B cell (primary cell): ENCODE measurements at regions of chr2 and their contacts with region 1.

Region 1: GRCh38 chr2:8477552-8478470 is 204.0 kb upstream of the ID2 start:
- DNase-seq: peak; percentile 80
- ATAC-seq: peak; percentile 71
- H3K4me3 ChIP-seq: peak overlapping the region in 2 of 5 experiments; percentile 16 to 20
- H3K4me3 Mint-ChIP-seq: peak overlapping the region; percentile 69
- H3K27ac ChIP-seq: no peak overlapping the region
- H3K27ac Mint-ChIP-seq: peak overlapping the region; percentile 74
- H3K4me1 ChIP-seq: peaks cover 56 to 57% of the 10 kb centered on the region in 2 donors
- H3K4me1 Mint-ChIP-seq: peaks cover 49% of the 10 kb centered on the region
- H3K27me3 ChIP-seq: peaks cover 0 to 83% (median 70%) of the 10 kb centered on the region in 4 experiments
- H3K27me3 Mint-ChIP-seq: peaks cover 63% of the 10 kb centered on the region
- CTCF ChIP-seq: no peak

Region 2: GRCh38 chr2:8303322-8303832 is 174.4 kb before region 1 on chr2:
- CTCF ChIA-PET with region 1: no interaction called
- POLR2A ChIA-PET with region 1: no interaction called
- intact Hi-C with region 1: loop called (anchors 5 kb)
- DNase-seq: peak; percentile 80
- ATAC-seq: peak; percentile 82
- H3K4me3 ChIP-seq: no peak overlapping the region
- H3K4me3 Mint-ChIP-seq: peak overlapping the region; percentile 57
- H3K27ac ChIP-seq: no peak overlapping the region
- H3K27ac Mint-ChIP-seq: peak overlapping the region; percentile 62
- H3K4me1 ChIP-seq: peaks cover 43 to 51% of the 10 kb centered on the region in 2 donors
- H3K4me1 Mint-ChIP-seq: peaks cover 38% of the 10 kb centered on the region
- H3K27me3 ChIP-seq: peaks cover 0 to 78% (median 55%) of the 10 kb centered on the region in 4 experiments
- H3K27me3 Mint-ChIP-seq: peaks cover 81% of the 10 kb centered on the region
- CTCF ChIP-seq: no peak

Region 3: GRCh38 chr2:8352296-8352695 is 125.5 kb before region 1 on chr2:
- CTCF ChIA-PET with region 1: no interaction called
- POLR2A ChIA-PET with region 1: no interaction called
- intact Hi-C with region 1: no loop called
- DNase-seq: no peak
- ATAC-seq: no peak
- H3K4me3 ChIP-seq: no peak overlapping the region
- H3K4me3 Mint-ChIP-seq: no peak overlapping the region
- H3K27ac ChIP-seq: no peak overlapping the region
- H3K27ac Mint-ChIP-seq: no peak overlapping the region
- H3K4me1 ChIP-seq: no peaks in the 10 kb centered on the region
- H3K4me1 Mint-ChIP-seq: no peaks in the 10 kb centered on the region
- H3K27me3 ChIP-seq: peaks cover 0 to 8% (median 4%) of the 10 kb centered on the region in 4 experiments
- H3K27me3 Mint-ChIP-seq: peaks cover 53% of the 10 kb centered on the region
- CTCF ChIP-seq: no peak

Region 4: DNA sequence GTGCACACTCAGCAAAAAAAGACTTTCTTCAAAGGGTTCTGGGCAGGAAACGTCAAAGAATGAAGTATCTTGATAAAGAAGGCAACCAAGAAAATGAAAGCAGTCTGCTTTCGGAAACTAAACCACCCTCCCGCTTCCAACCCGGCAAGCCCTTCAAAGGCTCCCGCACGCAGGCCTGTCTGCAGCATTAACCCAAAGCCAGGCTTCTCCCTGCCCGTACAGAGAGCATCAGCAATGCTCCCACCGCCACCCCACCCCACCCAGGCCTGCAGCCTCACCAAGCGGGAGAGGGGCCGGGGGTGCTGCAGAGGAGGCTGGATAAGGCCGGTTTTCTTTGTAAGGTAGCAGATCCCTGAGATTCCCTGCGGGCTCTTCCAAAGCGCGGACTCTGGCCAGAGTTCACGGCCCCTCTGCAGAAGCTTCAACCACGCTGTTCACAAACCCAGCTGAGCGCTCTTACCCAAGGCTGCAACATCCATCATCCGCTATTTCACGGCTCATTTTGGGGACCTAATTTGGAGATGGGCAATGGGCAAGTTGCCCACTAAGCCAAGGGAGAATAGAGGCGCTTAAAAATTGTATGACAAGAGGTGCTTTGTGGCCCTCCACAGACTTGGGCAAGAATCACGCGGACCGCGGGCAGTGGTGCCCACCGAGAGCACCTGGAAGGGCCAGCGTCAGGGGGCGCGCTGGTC is 21.5 kb before region 1 on chr2:
- CTCF ChIA-PET with region 1: no interaction called
- POLR2A ChIA-PET with region 1: no interaction called
- intact Hi-C with region 1: no loop called
- DNase-seq: no peak
- ATAC-seq: no peak
- H3K4me3 ChIP-seq: no peak overlapping the region
- H3K4me3 Mint-ChIP-seq: no peak overlapping the region
- H3K27ac ChIP-seq: no peak overlapping the region
- H3K27ac Mint-ChIP-seq: no peak overlapping the region
- H3K4me1 ChIP-seq: peaks cover 14 to 19% of the 10 kb centered on the region in 2 donors
- H3K4me1 Mint-ChIP-seq: peaks cover 15% of the 10 kb centered on the region
- H3K27me3 ChIP-seq: peaks cover 0 to 91% (median 60%) of the 10 kb centered on the region in 4 experiments
- H3K27me3 Mint-ChIP-seq: peaks cover 91% of the 10 kb centered on the region
- CTCF ChIP-seq: no peak

Region 5: DNA sequence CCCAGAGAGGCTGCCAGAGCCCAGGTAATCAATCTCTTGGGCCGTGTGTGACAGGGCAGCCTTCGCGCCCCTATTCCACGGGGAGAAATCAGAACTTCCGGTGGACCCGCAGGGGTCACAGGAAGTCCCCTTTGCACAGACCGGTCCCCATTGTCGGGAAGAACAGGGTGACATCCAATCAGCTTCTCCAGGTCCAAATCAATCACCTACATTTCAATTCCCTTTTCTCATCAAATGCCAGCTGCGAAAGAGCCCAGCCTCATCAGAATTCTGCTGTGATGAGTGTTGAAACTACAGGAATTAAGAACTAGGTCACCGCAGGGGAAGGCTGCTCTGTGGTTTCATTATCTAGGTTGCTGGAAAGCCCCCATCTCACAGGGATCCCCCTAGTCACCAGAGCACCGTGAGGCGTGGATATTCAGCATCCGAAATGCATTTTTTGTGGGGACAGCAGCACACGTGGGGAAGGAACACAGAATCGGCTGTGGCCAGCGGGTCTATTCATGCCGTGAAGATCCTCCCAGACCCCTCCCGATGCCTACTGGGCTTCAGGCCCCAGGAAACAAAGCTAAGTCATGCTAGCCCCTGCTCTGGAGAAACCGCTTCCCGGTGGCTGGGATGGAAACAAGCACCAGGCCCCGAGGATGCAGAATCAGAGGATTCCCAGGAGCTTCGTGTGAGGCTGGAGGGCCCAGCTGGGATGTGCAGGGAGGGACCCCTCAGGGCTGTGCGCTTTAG is 10.4 kb after region 1 on chr2:
- CTCF ChIA-PET with region 1: no interaction called
- POLR2A ChIA-PET with region 1: no interaction called
- intact Hi-C with region 1: loop called (anchors 1 kb)
- DNase-seq: peak; percentile 82
- ATAC-seq: peak; percentile 82
- H3K4me3 ChIP-seq: peak overlapping the region in 2 of 5 experiments; percentile 32 to 34
- H3K4me3 Mint-ChIP-seq: peak overlapping the region; percentile 83
- H3K27ac ChIP-seq: no peak overlapping the region
- H3K27ac Mint-ChIP-seq: peak overlapping the region; percentile 66
- H3K4me1 ChIP-seq: peaks cover 20 to 23% of the 10 kb centered on the region in 2 donors
- H3K4me1 Mint-ChIP-seq: peaks cover 22% of the 10 kb centered on the region
- H3K27me3 ChIP-seq: peaks cover 2 to 73% (median 56%) of the 10 kb centered on the region in 4 experiments
- H3K27me3 Mint-ChIP-seq: peaks cover 79% of the 10 kb centered on the region
- CTCF ChIP-seq: no peak

Region 6: DNA sequence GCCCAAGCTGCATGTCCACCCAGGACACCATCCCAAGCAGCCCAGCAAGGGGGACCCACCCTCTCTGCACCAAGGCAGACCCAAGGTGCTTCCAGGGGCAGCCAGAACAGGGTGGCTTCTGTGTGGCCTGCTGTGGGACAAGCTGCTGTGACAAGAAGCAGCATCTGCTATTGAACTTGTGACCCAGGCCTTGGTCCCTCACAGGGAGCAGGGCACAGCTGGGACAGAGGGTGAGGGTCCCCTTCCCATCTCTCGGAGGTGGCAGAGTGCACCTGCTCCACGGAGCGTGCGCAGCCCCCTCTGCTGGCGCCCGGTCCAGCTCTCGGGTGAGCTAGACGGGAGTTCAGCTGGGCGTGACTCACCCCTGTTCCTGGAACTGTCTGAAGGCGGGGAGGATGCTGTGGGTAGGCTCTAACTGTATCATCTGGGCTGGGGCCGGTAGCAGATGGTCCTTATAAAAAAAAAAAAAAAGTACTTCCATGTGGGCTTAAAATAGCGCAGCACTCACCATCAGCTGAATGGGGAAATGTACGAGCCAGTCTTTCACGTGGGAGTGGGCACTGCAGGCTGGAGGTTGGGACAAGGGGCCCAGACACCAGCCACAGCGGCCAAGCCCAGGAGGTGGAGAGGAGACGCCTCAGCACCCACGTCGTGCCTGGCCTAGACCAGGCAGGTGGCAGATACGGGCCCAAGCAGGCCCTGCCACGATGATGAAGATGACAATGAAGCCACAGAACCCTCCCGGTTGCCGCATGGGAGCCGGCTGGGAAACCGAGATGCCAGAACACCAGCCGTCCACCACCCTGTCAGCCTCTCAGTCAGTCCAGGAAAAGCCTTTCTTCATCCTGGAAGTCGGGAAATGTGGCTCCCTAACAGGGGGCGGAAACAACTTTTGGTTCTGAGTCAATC is 67.2 kb after region 1 on chr2:
- CTCF ChIA-PET with region 1: interaction called, 7 read pairs
- POLR2A ChIA-PET with region 1: no interaction called
- intact Hi-C with region 1: loop called (anchors 2 kb)
- DNase-seq: peak; percentile 70
- ATAC-seq: peak; percentile 74
- H3K4me3 ChIP-seq: no peak overlapping the region
- H3K4me3 Mint-ChIP-seq: peak overlapping the region; percentile 54
- H3K27ac ChIP-seq: no peak overlapping the region
- H3K27ac Mint-ChIP-seq: no peak overlapping the region
- H3K4me1 ChIP-seq: peaks cover 35 to 36% of the 10 kb centered on the region in 2 donors
- H3K4me1 Mint-ChIP-seq: peaks cover 35% of the 10 kb centered on the region
- H3K27me3 ChIP-seq: peaks cover 0 to 70% (median 17%) of the 10 kb centered on the region in 4 experiments
- H3K27me3 Mint-ChIP-seq: peaks cover 58% of the 10 kb centered on the region
- CTCF ChIP-seq: peak; percentile 39

Region 7: GRCh38 chr2:8574144-8575037 is 96.6 kb after region 1 on chr2:
- CTCF ChIA-PET with region 1: no interaction called
- POLR2A ChIA-PET with region 1: interaction called, 4 read pairs
- intact Hi-C with region 1: loop called (anchors 2 kb)
- DNase-seq: peak; percentile 51
- ATAC-seq: peak; percentile 16
- H3K4me3 ChIP-seq: no peak overlapping the region
- H3K4me3 Mint-ChIP-seq: peak overlapping the region; percentile 76
- H3K27ac ChIP-seq: no peak overlapping the region
- H3K27ac Mint-ChIP-seq: no peak overlapping the region
- H3K4me1 ChIP-seq: peaks cover 52 to 70% of the 10 kb centered on the region in 2 donors
- H3K4me1 Mint-ChIP-seq: peaks cover 67% of the 10 kb centered on the region
- H3K27me3 ChIP-seq: peaks cover 0 to 68% (median 20%) of the 10 kb centered on the region in 4 experiments
- H3K27me3 Mint-ChIP-seq: peaks cover 62% of the 10 kb centered on the region
- CTCF ChIP-seq: no peak

Region 8: GRCh38 chr2:8628230-8629209 is 150.7 kb after region 1 on chr2:
- CTCF ChIA-PET with region 1: no interaction called
- POLR2A ChIA-PET with region 1: no interaction called
- intact Hi-C with region 1: no loop called
- DNase-seq: no peak
- ATAC-seq: no peak
- H3K4me3 ChIP-seq: no peak overlapping the region
- H3K4me3 Mint-ChIP-seq: no peak overlapping the region
- H3K27ac ChIP-seq: no peak overlapping the region
- H3K27ac Mint-ChIP-seq: no peak overlapping the region
- H3K4me1 ChIP-seq: peaks cover 8 to 17% of the 10 kb centered on the region in 2 donors
- H3K4me1 Mint-ChIP-seq: peaks cover 19% of the 10 kb centered on the region
- H3K27me3 ChIP-seq: no peaks in the 10 kb centered on the region
- H3K27me3 Mint-ChIP-seq: peaks cover 13% of the 10 kb centered on the region
- CTCF ChIP-seq: no peak